Naive thymus-derived CD4-positive, alpha-beta T cell (primary cell): ENCODE measurements at regions of chr11 and their contacts with region 1.

Region 1: DNA sequence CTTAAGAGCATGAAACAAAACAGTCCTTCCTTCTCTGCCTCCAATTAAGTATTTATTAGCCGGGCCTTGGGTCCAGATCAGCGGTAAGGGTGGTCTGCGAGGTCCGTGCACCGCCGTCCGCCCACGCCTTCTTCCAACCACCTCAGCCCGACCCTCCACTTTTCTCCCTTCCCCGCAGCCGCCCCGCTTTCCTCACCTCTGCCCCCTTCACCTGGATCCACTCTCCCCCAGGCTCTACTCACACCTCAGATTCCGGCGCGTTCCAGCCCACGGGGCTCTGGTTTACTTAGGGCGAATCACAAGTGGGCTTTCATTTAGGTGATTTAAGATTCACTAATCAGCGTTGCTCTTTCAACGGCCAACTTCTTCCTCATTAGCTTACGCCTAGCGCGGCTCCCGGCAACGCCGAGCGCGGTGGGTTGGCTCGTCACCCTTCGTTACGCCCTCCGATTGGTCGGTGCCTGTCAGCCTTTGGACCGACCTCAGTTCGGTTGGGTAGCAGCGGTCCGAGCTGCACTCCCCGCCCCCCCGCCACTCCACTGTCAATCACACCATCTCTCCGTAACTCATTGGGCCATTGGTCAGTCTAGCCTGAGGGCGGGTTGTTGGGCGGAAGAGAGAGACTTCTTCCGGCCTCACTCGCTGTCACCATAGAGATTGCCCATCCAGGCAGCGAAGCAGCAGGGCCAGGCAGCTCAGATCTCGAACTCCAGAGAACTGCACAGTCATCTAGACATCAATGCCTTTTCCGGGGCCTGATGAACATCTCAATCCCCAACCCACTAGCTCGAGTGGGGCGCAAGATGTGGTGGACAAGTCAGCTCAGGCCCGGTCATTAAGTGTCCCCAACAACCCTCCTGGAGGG is at the start of gene TMEM218:
- DNase-seq: peak; percentile 81 to 97 (median 93)
- ATAC-seq: peak; percentile 97
- H3K4me3 ChIP-seq: peak within 1 kb of the TSS; percentile 81
- H3K4me3 Mint-ChIP-seq: peak within 1 kb of the TSS; percentile 91 to 100 (median 96)
- H3K27ac ChIP-seq: peak within 1 kb of the TSS; percentile 77
- H3K27ac Mint-ChIP-seq: peak within 1 kb of the TSS; percentile 91 to 97 (median 94)
- H3K4me1 ChIP-seq: peaks cover 0 to 8% of the 10 kb centered on the region in 2 donors
- H3K4me1 Mint-ChIP-seq: peaks cover 0 to 33% (median 22%) of the 10 kb centered on the region in 7 donors
- H3K27me3 ChIP-seq: no peaks in the 10 kb centered on the region
- H3K27me3 Mint-ChIP-seq: peaks cover 0 to 2% (median 0%) of the 10 kb centered on the region in 5 donors
- total RNA-seq, gene TMEM218: 10.2 to 18.5 (median 13.9) TPM

Region 2: DNA sequence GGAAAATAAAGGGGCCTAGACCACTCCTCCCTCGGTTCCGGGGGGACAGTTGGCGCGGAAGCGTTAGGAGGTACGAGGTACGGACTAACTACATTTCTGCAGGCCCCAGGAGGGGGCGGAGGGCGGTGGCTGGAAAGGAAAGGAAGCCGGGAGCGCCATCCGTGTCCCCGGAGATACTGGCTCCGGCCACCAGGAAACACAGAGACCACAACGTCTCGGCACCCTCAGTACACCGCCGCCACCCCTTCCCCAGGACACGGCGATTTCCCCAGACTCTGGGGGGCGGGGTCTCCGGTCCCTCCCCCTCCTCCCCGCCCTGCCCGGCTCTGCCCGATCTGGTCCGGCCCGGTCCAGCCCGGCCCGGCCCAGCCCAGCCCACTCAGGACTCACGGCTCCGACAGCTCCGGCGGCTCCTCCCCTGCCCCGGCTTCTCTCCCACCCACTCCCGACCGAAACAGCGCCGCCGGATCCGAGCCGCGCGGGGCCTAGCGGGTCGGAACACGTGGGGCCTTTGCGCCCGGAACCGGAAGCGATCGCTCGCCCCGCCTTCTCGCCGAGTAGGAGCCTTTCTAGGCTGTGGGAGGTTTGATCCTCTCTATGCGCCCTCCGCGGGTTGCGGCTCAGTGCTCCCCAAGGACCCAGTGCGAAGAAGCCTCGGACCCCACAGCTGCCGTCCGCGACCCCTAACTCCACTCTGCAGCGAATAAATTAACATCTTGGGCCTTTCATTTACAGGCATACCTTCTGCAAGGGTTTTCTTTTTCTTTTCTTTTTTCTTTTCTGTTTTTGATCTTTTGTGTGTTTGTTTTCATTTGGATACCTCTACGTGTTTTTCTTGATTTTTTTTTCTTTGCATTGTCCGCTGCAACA is 1370.2 kb before region 1 on chr11 and contains the start of gene ZNF202:
- CTCF ChIA-PET with region 1: no interaction called
- POLR2A ChIA-PET with region 1: no interaction called
- intact Hi-C with region 1: loop called in 1 of 2 experiments (anchors 2 kb)
- DNase-seq: peak; percentile 83 to 92 (median 89)
- ATAC-seq: peak; percentile 98
- H3K4me3 ChIP-seq: peak within 1 kb of the TSS; percentile 92
- H3K4me3 Mint-ChIP-seq: peak within 1 kb of the TSS; percentile 85 to 100 (median 96)
- H3K27ac ChIP-seq: peak within 1 kb of the TSS; percentile 85
- H3K27ac Mint-ChIP-seq: peak within 1 kb of the TSS; percentile 91 to 98 (median 95)
- H3K4me1 ChIP-seq: peaks cover 19% of the 10 kb centered on the region in 2 donors
- H3K4me1 Mint-ChIP-seq: peaks cover 30 to 57% (median 46%) of the 10 kb centered on the region in 7 donors
- H3K27me3 ChIP-seq: no peaks in the 10 kb centered on the region
- H3K27me3 Mint-ChIP-seq: peaks cover 0 to 24% (median 6%) of the 10 kb centered on the region in 5 donors
- total RNA-seq, gene ZNF202: 13.0 to 27.0 (median 18.6) TPM

Region 3: GRCh38 chr11:124758317-124759203 is 353.0 kb before region 1 on chr11:
- CTCF ChIA-PET with region 1: no interaction called
- POLR2A ChIA-PET with region 1: no interaction called
- intact Hi-C with region 1: loop called in 1 of 2 experiments (anchors 1 kb)
- DNase-seq: peak in 8 of 9 donors; percentile 61 to 73 (median 66)
- ATAC-seq: peak; percentile 78
- H3K4me3 ChIP-seq: peak overlapping the region; percentile 27
- H3K4me3 Mint-ChIP-seq: peak overlapping the region; percentile 52 to 98 (median 76)
- H3K27ac ChIP-seq: no peak overlapping the region
- H3K27ac Mint-ChIP-seq: peak overlapping the region in 2 of 9 donors; percentile 38 to 41
- H3K4me1 ChIP-seq: peaks cover 8 to 31% of the 10 kb centered on the region in 2 donors
- H3K4me1 Mint-ChIP-seq: peaks cover 6 to 40% (median 24%) of the 10 kb centered on the region in 7 donors
- H3K27me3 ChIP-seq: peaks cover 7 to 16% of the 10 kb centered on the region in 2 donors
- H3K27me3 Mint-ChIP-seq: peaks cover 36 to 60% (median 53%) of the 10 kb centered on the region in 5 donors

Region 4: DNA sequence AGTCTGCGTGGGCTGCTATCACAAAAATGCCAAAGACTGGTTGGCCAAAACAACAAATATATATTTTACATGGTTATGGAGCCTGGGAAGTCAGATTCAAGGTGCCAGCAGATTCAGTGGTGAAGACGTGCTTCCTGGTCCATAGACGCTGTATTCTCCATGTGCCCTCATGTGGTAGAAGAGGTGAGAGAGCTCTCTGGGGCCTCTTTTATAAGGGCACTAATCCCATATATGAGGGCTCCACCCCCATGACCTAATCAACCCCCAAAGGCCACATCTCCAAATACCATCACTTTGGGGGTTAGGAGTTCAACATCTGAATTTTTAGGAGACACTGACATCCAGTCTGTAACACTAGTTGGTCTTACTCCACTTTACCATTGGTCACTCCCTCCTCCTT is 256.1 kb before region 1 on chr11:
- CTCF ChIA-PET with region 1: no interaction called
- POLR2A ChIA-PET with region 1: no interaction called
- intact Hi-C with region 1: no loop called
- DNase-seq: no peak
- ATAC-seq: no peak
- H3K4me3 ChIP-seq: no peak overlapping the region
- H3K4me3 Mint-ChIP-seq: no peak overlapping the region
- H3K27ac ChIP-seq: no peak overlapping the region
- H3K27ac Mint-ChIP-seq: no peak overlapping the region
- H3K4me1 ChIP-seq: no peaks in the 10 kb centered on the region
- H3K4me1 Mint-ChIP-seq: no peaks in the 10 kb centered on the region
- H3K27me3 ChIP-seq: no peaks in the 10 kb centered on the region
- H3K27me3 Mint-ChIP-seq: peaks cover 12 to 19% (median 14%) of the 10 kb centered on the region in 5 donors

Region 5: DNA sequence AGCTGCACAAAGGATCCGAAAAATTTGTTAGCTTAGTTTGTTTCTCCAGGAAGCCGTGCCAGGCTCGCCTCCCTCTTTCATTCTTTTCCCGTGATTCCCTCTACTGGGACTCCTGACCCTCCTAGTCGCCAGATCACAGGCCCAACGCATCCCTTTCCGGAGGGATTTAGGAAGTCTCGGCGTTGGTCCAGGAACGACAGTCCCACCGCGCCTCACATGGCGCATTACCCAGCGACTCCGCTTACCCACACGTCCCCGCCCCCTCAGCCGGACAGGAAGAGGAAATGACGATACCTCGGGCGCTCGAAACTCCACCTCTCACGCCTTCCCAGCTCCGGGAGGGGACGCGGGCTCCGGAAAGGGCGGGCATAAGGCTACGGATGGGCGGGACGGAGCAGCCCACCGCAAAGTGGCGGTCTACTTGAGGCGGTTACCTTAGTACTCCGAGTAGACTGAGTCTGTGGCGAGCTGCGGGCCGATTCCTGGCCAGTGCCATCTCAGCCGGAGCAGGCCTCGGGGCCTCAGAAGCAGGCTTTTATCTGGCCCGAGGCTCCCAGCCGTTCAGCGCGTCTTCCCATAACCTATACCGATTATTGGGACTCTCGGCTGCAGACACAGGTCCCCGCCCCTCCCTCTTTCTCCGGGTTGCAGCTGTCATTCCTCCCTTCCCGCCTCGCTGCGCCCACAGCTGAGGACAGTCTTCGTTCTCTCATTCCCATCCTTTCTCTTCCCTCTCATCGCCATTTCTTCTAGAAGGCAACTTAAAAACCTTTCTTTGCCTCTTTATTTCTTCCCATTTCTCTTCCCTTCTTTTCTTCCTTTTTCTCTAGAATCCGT is 157.6 kb before region 1 on chr11 and contains the start of gene CCDC15:
- CTCF ChIA-PET with region 1: interaction called, 3 read pairs
- POLR2A ChIA-PET with region 1: interaction called, 18 read pairs
- intact Hi-C with region 1: loop called (anchors 1 kb)
- DNase-seq: peak; percentile 78 to 94 (median 92)
- ATAC-seq: peak; percentile 99
- H3K4me3 ChIP-seq: peak within 1 kb of the TSS; percentile 72
- H3K4me3 Mint-ChIP-seq: no peak within 1 kb of the TSS
- H3K27ac ChIP-seq: peak within 1 kb of the TSS; percentile 85
- H3K27ac Mint-ChIP-seq: no peak within 1 kb of the TSS
- H3K4me1 ChIP-seq: peaks cover 27 to 42% of the 10 kb centered on the region in 2 donors
- H3K4me1 Mint-ChIP-seq: peaks cover 0 to 7% (median 0%) of the 10 kb centered on the region in 7 donors
- H3K27me3 ChIP-seq: no peaks in the 10 kb centered on the region
- H3K27me3 Mint-ChIP-seq: no peaks in the 10 kb centered on the region
- total RNA-seq, gene CCDC15: 1.6 to 4.7 (median 2.7) TPM

Region 6: DNA sequence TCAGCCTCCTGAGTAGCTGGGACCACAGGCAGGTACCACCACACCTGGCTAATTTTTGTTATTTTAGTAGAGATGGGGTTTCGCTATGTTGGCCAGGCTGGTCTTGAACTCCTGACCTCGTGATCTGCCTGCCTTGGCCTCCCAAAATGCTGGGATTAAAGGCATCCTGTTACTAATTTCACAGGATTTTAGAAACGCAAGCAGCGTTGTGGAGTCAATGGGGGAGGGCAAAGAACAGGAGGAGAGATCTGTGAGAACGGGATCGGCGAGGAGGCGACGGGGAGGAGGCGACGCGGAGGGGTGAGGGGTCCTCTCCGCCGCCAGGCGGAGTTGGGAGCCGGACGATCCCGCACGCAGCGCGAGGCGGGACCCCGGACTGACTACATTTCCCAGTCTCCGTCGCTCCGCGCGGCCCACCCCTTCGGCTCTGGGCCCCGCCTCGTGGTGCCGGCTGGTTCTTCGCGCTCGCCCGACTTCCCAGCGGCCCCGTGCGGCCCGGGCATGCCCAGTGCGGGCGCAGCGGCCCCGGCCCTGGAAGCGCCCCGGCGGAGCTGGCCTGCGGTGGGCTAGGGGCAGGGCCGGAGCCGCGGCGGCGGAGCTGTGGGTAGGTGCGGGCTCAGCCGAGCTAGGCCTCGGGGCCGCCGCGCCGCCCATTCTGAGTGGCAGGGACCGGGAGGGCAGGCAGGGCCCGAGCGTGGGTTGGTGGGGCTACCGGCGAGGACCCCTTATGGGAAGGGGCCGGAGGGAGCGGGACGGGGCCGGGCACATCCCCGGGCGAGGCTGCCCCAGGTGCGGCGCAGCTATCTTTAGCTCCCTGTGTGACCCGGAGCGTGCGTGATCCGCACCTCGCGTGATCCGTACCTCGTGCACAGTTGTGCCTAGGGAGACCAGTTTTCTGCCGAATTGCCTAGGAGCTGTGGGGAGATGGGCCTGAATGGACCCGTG is 457.7 kb after region 1 on chr11 and contains the start of gene EI24:
- CTCF ChIA-PET with region 1: no interaction called
- POLR2A ChIA-PET with region 1: no interaction called
- intact Hi-C with region 1: loop called (anchors 1 kb)
- DNase-seq: peak; percentile 73 to 89 (median 81)
- ATAC-seq: peak; percentile 99
- H3K4me3 ChIP-seq: peak within 1 kb of the TSS; percentile 90
- H3K4me3 Mint-ChIP-seq: peak within 1 kb of the TSS; percentile 90 to 97 (median 94)
- H3K27ac ChIP-seq: peak within 1 kb of the TSS; percentile 90
- H3K27ac Mint-ChIP-seq: peak within 1 kb of the TSS; percentile 78 to 96 (median 91)
- H3K4me1 ChIP-seq: peaks cover 13 to 16% of the 10 kb centered on the region in 2 donors
- H3K4me1 Mint-ChIP-seq: peaks cover 12 to 38% (median 26%) of the 10 kb centered on the region in 7 donors
- H3K27me3 ChIP-seq: no peaks in the 10 kb centered on the region
- H3K27me3 Mint-ChIP-seq: no peaks in the 10 kb centered on the region
- total RNA-seq, gene EI24: 21.3 to 42.7 (median 35.7) TPM

Region 7: GRCh38 chr11:126211235-126212088 is 1099.9 kb after region 1 on chr11 and contains the starts of genes FAM118B and RPUSD4:
- CTCF ChIA-PET with region 1: no interaction called
- POLR2A ChIA-PET with region 1: no interaction called
- intact Hi-C with region 1: loop called (anchors 2 to 5 kb)
- DNase-seq: peak; percentile 96 to 99 (median 98)
- ATAC-seq: peak; percentile 99
- H3K4me3 ChIP-seq: peak within 1 kb of the TSS; percentile 100
- H3K4me3 Mint-ChIP-seq: peak within 1 kb of the TSS; percentile 93 to 100 (median 98)
- H3K27ac ChIP-seq: peak within 1 kb of the TSS; percentile 84
- H3K27ac Mint-ChIP-seq: peak within 1 kb of the TSS; percentile 90 to 99 (median 96)
- H3K4me1 ChIP-seq: peaks cover 12 to 15% of the 10 kb centered on the region in 2 donors
- H3K4me1 Mint-ChIP-seq: peaks cover 28 to 57% (median 38%) of the 10 kb centered on the region in 7 donors
- H3K27me3 ChIP-seq: no peaks in the 10 kb centered on the region
- H3K27me3 Mint-ChIP-seq: peaks cover 0 to 6% (median 0%) of the 10 kb centered on the region in 5 donors
- total RNA-seq, gene FAM118B: 4.0 to 10.9 (median 10.5) TPM
- total RNA-seq, gene RPUSD4: 30.1 to 49.6 (median 43.8) TPM